A673 (cell line): ENCODE measurements at regions of chr11 and their contacts with region 1.

Region 1: DNA sequence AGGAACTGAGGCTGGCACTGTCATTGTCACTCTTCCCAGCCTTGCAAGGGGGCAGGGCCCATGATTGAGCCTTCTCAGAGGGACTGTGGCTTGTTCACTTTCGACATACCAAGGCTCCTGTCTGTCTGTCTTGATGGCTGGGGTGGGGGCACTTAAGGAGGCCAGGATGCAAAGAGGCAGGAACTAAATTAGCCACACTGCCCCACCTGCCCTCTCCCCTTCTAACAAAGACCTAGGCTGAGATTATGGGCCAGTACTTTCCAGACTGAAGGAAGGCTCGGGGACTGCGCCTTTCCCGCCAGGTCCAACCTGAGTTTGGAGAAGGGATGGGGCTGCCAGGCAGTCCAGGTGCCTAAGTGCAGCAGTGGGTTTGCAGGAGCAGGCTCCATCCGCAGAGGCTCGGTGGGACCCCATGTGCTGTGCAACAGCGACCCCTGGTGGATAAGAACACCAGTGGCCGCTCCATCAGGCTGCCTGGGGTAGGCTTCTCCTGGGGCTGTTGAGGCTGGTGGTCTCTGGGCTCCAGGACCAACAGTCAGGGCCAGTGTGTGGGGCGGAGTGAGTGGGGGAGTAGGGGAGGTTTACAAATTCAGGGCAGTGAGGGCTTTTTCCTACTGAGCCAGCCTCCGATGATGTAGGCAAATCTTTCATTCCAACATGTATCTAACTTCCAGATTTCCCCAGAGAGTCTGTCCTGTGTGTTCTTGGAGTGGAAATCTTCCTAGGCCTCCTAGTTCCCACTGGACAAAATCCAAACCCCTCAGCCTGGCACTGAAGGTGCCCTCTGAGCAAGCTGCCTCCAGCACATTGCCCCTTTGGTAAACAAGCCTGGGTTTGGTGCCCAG is 93.9 kb downstream of the INSC start:
- DNase-seq: peak; percentile 75
- H3K4me3 ChIP-seq: no peak overlapping the region
- H3K27ac ChIP-seq: no peak overlapping the region
- H3K4me1 ChIP-seq: no peaks in the 10 kb centered on the region
- H3K27me3 ChIP-seq: no peaks in the 10 kb centered on the region
- CTCF ChIP-seq: peak; percentile 88

Region 2: DNA sequence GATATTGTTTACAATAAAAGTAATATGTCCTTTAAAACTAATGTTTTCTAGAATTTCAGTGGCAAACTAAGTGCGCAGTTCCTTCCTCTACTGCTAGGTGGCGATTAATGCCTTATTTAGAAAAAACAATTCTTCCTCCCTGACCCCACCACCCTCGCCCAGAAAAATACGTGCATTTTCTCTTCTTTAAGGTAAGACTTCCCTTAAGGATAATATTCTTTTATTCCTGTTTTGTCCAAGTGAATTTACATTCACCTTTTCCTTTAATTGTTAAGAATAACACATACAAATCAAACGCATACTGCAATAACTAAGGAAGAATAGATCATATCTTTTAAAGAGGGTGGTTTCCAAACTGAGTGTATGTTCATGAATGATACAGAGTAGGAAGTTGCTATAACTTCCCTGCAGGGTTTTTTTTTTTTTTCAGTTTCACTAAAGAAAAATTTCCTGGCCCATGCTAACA is 671.4 kb before region 1 on chr11:
- CTCF ChIA-PET with region 1: no interaction called
- POLR2A ChIA-PET with region 1: no interaction called
- intact Hi-C with region 1: loop called (anchors 10 kb)
- DNase-seq: peak; percentile 43
- H3K4me3 ChIP-seq: no peak overlapping the region
- H3K27ac ChIP-seq: no peak overlapping the region
- H3K4me1 ChIP-seq: no peaks in the 10 kb centered on the region
- H3K27me3 ChIP-seq: no peaks in the 10 kb centered on the region
- CTCF ChIP-seq: peak; percentile 73

Region 3: GRCh38 chr11:14789879-14790484 is 418.6 kb before region 1 on chr11:
- CTCF ChIA-PET with region 1: no interaction called
- POLR2A ChIA-PET with region 1: no interaction called
- intact Hi-C with region 1: loop called (anchors 5 kb)
- DNase-seq: peak; percentile 22
- H3K4me3 ChIP-seq: no peak overlapping the region
- H3K27ac ChIP-seq: no peak overlapping the region
- H3K4me1 ChIP-seq: peaks cover 17% of the 10 kb centered on the region
- H3K27me3 ChIP-seq: no peaks in the 10 kb centered on the region
- CTCF ChIP-seq: peak; percentile 67

Region 4: GRCh38 chr11:14892036-14892567 is 316.5 kb before region 1 on chr11 and contains the start of gene CYP2R1:
- CTCF ChIA-PET with region 1: no interaction called
- POLR2A ChIA-PET with region 1: no interaction called
- intact Hi-C with region 1: no loop called
- DNase-seq: peak; percentile 96
- H3K4me3 ChIP-seq: peak within 1 kb of the TSS; percentile 63
- H3K27ac ChIP-seq: peak within 1 kb of the TSS; percentile 83
- H3K4me1 ChIP-seq: peaks cover 8% of the 10 kb centered on the region
- H3K27me3 ChIP-seq: no peaks in the 10 kb centered on the region
- CTCF ChIP-seq: no peak
- total RNA-seq, gene CYP2R1: 16.2 and 17.6 TPM in 2 replicates

Region 5: GRCh38 chr11:15101072-15101709 is 107.4 kb before region 1 on chr11:
- CTCF ChIA-PET with region 1: interaction called, 6 read pairs
- POLR2A ChIA-PET with region 1: no interaction called
- intact Hi-C with region 1: loop called (anchors 1 kb)
- DNase-seq: peak; percentile 72
- H3K4me3 ChIP-seq: no peak overlapping the region
- H3K27ac ChIP-seq: no peak overlapping the region
- H3K4me1 ChIP-seq: no peaks in the 10 kb centered on the region
- H3K27me3 ChIP-seq: no peaks in the 10 kb centered on the region
- CTCF ChIP-seq: peak; percentile 82